ENCODE measurements at regions of chr10 and their contacts with region 1.

Region 1: GRCh38 chr10:97553575-97554031 is 19.0 kb upstream of the ANKRD2 start:
- DNase-seq: peak; percentile 66
- H3K4me3 Mint-ChIP-seq: no peak overlapping the region
- H3K27ac Mint-ChIP-seq: no peak overlapping the region
- H3K4me1 Mint-ChIP-seq: peaks cover 2% of the 10 kb centered on the region
- H3K27me3 Mint-ChIP-seq: no peaks in the 10 kb centered on the region

Region 2: DNA sequence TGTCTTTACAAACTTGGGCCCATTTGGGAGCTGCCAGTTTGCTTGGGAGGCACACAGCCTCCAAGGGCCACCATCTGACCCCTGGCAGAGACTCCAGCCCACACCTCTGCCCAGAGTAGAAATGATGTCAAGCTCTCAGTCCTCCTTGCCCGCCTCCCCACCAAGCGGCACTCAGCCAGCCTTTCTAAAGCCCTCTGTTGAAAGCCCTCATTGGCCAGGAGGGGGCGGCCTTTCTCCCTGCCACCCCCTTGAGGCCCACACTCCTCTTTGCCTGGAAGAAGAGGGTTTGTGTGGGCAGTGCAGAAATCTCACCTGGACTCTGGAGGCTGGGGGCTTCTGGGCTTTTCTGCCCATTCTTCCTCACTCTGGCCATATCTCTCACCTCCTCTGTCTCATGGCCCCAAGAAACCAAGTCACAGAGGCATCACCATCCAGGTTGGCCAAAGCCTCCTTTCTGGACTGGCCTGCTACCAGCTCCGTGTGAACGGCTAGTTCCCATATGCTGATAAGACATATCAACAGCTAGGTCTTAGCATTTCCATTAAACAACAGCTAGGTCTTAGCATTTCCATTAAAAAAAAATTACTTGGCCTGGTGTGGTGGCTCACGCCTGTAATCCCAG is 18.7 kb before region 1 on chr10:
- CTCF ChIA-PET with region 1: interaction called, 53 read pairs
- POLR2A ChIA-PET with region 1: no interaction called
- DNase-seq: peak; percentile 49
- H3K4me3 Mint-ChIP-seq: no peak overlapping the region
- H3K27ac Mint-ChIP-seq: no peak overlapping the region
- H3K4me1 Mint-ChIP-seq: no peaks in the 10 kb centered on the region
- H3K27me3 Mint-ChIP-seq: no peaks in the 10 kb centered on the region

Region 3: GRCh38 chr10:97543025-97543575 is 10.5 kb before region 1 on chr10:
- CTCF ChIA-PET with region 1: interaction called, 24 read pairs
- POLR2A ChIA-PET with region 1: no interaction called
- DNase-seq: peak; percentile 62
- H3K4me3 Mint-ChIP-seq: no peak overlapping the region
- H3K27ac Mint-ChIP-seq: peak overlapping the region; percentile 32
- H3K4me1 Mint-ChIP-seq: peaks cover 23% of the 10 kb centered on the region
- H3K27me3 Mint-ChIP-seq: no peaks in the 10 kb centered on the region

Region 4: GRCh38 chr10:97584060-97584797 is 30.6 kb after region 1 on chr10 and contains the start of gene HOGA1:
- CTCF ChIA-PET with region 1: no interaction called
- POLR2A ChIA-PET with region 1: no interaction called
- DNase-seq: no peak
- H3K4me3 Mint-ChIP-seq: no peak within 1 kb of the TSS
- H3K27ac Mint-ChIP-seq: no peak within 1 kb of the TSS
- H3K4me1 Mint-ChIP-seq: peaks cover 1% of the 10 kb centered on the region
- H3K27me3 Mint-ChIP-seq: peaks cover 2% of the 10 kb centered on the region
- total RNA-seq, gene HOGA1: not detected

Measured in activated CD4-positive, alpha-beta memory T cell treated with anti-CD3 and anti-CD28 coated beads, Interleukin-2, amount 10 ng/mL, durations not matched to agents 7 days and 5 days (primary cell).